Activated CD8-positive, alpha-beta T cell treated with anti-CD3 and anti-CD28 coated beads, Interleukin-2, amount 10 ng/mL, durations not matched to agents 7 days and 5 days (primary cell): ENCODE measurements at regions of chr22 and their contacts with region 1.

Region 1: DNA sequence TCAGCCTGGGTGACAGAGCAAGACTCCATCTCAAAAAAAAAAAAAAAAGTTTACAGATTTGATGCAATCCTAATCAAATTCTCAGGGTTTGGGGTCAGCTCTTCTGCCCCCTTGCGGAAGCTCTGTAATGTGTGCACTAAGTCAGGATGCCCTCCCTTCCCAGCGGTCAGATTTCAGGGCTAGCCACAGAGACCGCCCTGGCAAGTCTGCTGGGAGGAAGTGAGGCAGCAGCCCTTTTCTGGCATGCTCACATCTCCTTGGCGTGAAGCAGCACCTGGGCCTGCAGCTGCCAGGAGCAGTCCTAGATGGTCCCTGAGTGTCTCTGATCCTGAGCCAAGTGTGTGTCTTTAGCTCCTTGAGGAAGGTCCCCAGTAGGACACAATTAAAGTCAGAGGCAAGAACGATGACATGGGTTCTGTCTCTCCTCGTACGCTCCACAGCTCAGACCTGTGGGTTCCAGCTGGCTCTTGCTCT is 10.9 kb upstream of the APOBEC3C start:
- DNase-seq: peak; percentile 91
- ATAC-seq: peak; percentile 93
- H3K4me3 Mint-ChIP-seq: no peak overlapping the region
- H3K27ac Mint-ChIP-seq: peak overlapping the region; percentile 63
- H3K4me1 Mint-ChIP-seq: peaks cover 13% of the 10 kb centered on the region
- H3K27me3 Mint-ChIP-seq: peaks cover 15% of the 10 kb centered on the region

Region 2: DNA sequence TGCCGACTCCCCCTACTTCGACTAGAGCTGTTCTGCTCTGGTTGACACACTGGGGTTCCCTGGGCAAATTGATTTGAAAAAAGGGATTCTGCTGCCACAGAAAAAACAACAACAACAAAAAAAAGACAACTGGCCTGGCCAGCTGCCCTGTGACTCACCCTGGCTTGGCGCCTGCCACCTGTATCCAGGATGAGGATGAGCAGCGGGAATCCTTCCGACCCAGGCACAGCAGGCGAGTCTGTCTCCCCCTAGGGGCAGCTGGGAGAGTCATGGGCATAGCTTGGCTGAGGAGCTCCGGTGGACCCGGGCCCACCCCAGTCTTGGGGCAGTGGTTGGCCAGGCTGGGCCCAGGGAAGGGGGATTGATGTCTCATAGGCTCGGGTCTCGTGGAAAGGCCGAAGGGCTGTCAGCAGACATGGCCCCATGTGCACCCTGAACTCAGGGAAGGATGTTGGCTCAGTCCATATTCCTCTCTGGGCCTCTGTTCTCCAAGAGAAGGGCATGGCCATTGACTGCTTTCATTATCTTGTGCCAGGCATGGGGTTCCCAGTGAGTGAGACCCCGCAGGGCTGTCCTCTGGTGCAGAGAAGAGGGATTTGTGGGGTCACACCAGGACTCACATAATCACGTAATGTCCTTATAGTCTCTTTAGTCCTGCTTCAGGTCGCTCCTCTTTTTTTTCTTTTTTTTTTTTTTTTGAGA is 237.0 kb before region 1 on chr22:
- CTCF ChIA-PET with region 1: interaction called, 11 read pairs
- POLR2A ChIA-PET with region 1: interaction called, 3 read pairs
- DNase-seq: peak; percentile 46
- ATAC-seq: peak; percentile 62
- H3K4me3 Mint-ChIP-seq: no peak overlapping the region
- H3K27ac Mint-ChIP-seq: no peak overlapping the region
- H3K4me1 Mint-ChIP-seq: peaks cover 3% of the 10 kb centered on the region
- H3K27me3 Mint-ChIP-seq: no peaks in the 10 kb centered on the region

Region 3: GRCh38 chr22:38927033-38927781 is 76.0 kb before region 1 on chr22:
- CTCF ChIA-PET with region 1: interaction called, 10 read pairs
- POLR2A ChIA-PET with region 1: no interaction called
- DNase-seq: peak; percentile 39
- ATAC-seq: peak; percentile 49
- H3K4me3 Mint-ChIP-seq: no peak overlapping the region
- H3K27ac Mint-ChIP-seq: no peak overlapping the region
- H3K4me1 Mint-ChIP-seq: peaks cover 3% of the 10 kb centered on the region
- H3K27me3 Mint-ChIP-seq: peaks cover 38% of the 10 kb centered on the region

Region 4: GRCh38 chr22:38973289-38974169 is 29.7 kb before region 1 on chr22:
- CTCF ChIA-PET with region 1: interaction called, 52 read pairs
- POLR2A ChIA-PET with region 1: no interaction called
- DNase-seq: peak; percentile 70
- ATAC-seq: peak; percentile 71
- H3K4me3 Mint-ChIP-seq: no peak overlapping the region
- H3K27ac Mint-ChIP-seq: no peak overlapping the region
- H3K4me1 Mint-ChIP-seq: peaks cover 7% of the 10 kb centered on the region
- H3K27me3 Mint-ChIP-seq: peaks cover 28% of the 10 kb centered on the region

Region 5: GRCh38 chr22:38981992-38982927 is 20.9 kb before region 1 on chr22 and contains the start of gene APOBEC3B:
- CTCF ChIA-PET with region 1: interaction called, 18 read pairs
- POLR2A ChIA-PET with region 1: no interaction called
- DNase-seq: peak; percentile 86
- ATAC-seq: peak; percentile 75
- H3K4me3 Mint-ChIP-seq: peak within 1 kb of the TSS; percentile 75
- H3K27ac Mint-ChIP-seq: peak within 1 kb of the TSS; percentile 95
- H3K4me1 Mint-ChIP-seq: peaks cover 52% of the 10 kb centered on the region
- H3K27me3 Mint-ChIP-seq: peaks cover 6% of the 10 kb centered on the region
- total RNA-seq, gene APOBEC3B: 12.1 to 13.3 TPM

Region 6: GRCh38 chr22:39013942-39014722 is 10.9 kb after region 1 on chr22 and contains the start of gene APOBEC3C:
- CTCF ChIA-PET with region 1: interaction called, 10 read pairs
- POLR2A ChIA-PET with region 1: no interaction called
- DNase-seq: peak; percentile 94
- ATAC-seq: peak; percentile 95
- H3K4me3 Mint-ChIP-seq: peak within 1 kb of the TSS; percentile 97
- H3K27ac Mint-ChIP-seq: peak within 1 kb of the TSS; percentile 97
- H3K4me1 Mint-ChIP-seq: peaks cover 42% of the 10 kb centered on the region
- H3K27me3 Mint-ChIP-seq: no peaks in the 10 kb centered on the region
- total RNA-seq, gene APOBEC3C: 138 to 147 TPM